CD4-positive, alpha-beta T cell (primary cell): ENCODE measurements at regions of chr2 and their contacts with region 1.

Region 1: GRCh38 chr2:28346587-28346986 is 46.1 kb upstream of the FOSL2 start:
- DNase-seq: no peak
- ATAC-seq: no peak
- H3K4me3 ChIP-seq: no peak overlapping the region
- H3K4me3 Mint-ChIP-seq: no peak overlapping the region
- H3K27ac ChIP-seq: no peak overlapping the region
- H3K27ac Mint-ChIP-seq: no peak overlapping the region
- H3K4me1 ChIP-seq: peaks cover 35% of the 10 kb centered on the region
- H3K4me1 Mint-ChIP-seq: peaks cover 19% of the 10 kb centered on the region
- H3K27me3 ChIP-seq: no peaks in the 10 kb centered on the region
- H3K27me3 Mint-ChIP-seq: no peaks in the 10 kb centered on the region
- CTCF ChIP-seq: no peak

Region 2: DNA sequence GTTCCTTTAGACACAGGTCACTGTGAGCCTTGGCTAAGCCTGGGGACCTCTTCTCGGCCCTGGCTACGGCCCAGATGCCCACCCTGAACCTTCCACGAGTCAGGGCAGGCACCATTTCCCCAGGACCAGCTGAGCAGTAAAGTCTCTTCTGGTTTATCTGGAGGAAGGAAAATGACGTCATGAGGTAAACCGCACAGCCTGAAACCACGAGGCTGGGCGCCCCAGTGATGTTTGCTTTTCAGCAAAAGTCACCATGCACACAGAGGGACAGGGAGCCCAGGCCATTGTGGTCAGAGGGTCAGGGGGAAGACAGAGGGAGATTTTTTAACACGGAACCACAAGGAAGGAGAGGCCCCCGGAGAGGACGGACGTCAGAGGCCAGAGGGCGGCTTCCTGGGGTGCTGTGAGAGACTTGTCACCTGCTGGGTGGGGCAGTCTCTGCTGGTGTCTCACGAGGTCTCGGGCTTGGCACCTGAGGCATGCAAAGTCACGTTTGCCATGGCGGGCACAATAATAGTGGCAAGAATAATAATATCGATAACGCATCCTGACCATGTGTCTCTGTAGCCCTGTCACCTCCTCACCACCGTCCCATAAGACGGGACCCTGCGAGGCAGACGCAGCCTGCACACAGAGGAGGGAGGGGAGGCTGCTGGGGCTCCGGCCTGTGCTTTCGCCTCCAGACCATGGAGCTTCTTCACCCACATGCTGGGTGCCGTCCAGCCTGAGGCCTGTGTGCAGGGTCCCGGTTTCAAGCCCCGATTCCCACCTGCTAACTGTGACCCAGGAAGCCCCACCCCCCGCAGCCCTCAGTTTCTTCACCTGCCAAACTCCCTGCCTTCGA is 12.9 kb after region 1 on chr2:
- CTCF ChIA-PET with region 1: no interaction called
- POLR2A ChIA-PET with region 1: no interaction called
- intact Hi-C with region 1: no loop called
- DNase-seq: peak; percentile 54 to 94 (median 72)
- ATAC-seq: peak; percentile 84
- H3K4me3 ChIP-seq: peak overlapping the region; percentile 19
- H3K4me3 Mint-ChIP-seq: peak overlapping the region; percentile 91
- H3K27ac ChIP-seq: peak overlapping the region in 1 of 2 donors; percentile 44
- H3K27ac Mint-ChIP-seq: peak overlapping the region; percentile 89
- H3K4me1 ChIP-seq: peaks cover 84% of the 10 kb centered on the region
- H3K4me1 Mint-ChIP-seq: peaks cover 53% of the 10 kb centered on the region
- H3K27me3 ChIP-seq: no peaks in the 10 kb centered on the region
- H3K27me3 Mint-ChIP-seq: peaks cover 4% of the 10 kb centered on the region
- CTCF ChIP-seq: no peak

Region 3: GRCh38 chr2:28437151-28437811 is 90.7 kb after region 1 on chr2:
- CTCF ChIA-PET with region 1: no interaction called
- POLR2A ChIA-PET with region 1: no interaction called
- intact Hi-C with region 1: loop called in 1 of 2 experiments (anchors 5 kb)
- DNase-seq: peak in 1 of 14 experiments; percentile 34
- ATAC-seq: no peak
- H3K4me3 ChIP-seq: no peak overlapping the region
- H3K4me3 Mint-ChIP-seq: no peak overlapping the region
- H3K27ac ChIP-seq: no peak overlapping the region
- H3K27ac Mint-ChIP-seq: no peak overlapping the region
- H3K4me1 ChIP-seq: peaks cover 5% of the 10 kb centered on the region
- H3K4me1 Mint-ChIP-seq: no peaks in the 10 kb centered on the region
- H3K27me3 ChIP-seq: no peaks in the 10 kb centered on the region
- H3K27me3 Mint-ChIP-seq: no peaks in the 10 kb centered on the region
- CTCF ChIP-seq: no peak

Region 4: DNA sequence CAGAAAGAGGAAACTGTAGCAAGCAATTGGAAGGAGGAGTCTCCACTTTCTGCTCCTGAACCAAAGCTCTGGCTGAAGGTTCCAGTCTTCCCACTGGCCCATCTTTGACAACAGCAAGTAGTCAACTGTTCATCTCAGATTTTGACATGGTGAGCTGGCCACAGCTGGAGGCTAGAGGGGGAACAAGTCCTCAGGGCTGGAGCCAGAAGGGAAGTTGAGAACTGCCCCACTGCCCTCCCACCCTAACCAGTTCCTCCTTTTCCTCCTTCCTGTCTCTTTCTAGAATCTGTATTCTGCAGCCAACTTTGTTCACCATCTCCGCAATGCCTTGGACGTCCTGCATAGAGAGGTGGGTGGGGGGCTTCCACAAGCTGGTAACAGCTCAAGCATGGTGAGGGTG is 255.0 kb after region 1 on chr2:
- CTCF ChIA-PET with region 1: no interaction called
- POLR2A ChIA-PET with region 1: no interaction called
- intact Hi-C with region 1: no loop called
- DNase-seq: no peak
- ATAC-seq: no peak
- H3K4me3 ChIP-seq: no peak overlapping the region
- H3K4me3 Mint-ChIP-seq: no peak overlapping the region
- H3K27ac ChIP-seq: no peak overlapping the region
- H3K27ac Mint-ChIP-seq: no peak overlapping the region
- H3K4me1 ChIP-seq: peaks cover 20% of the 10 kb centered on the region
- H3K4me1 Mint-ChIP-seq: peaks cover 11% of the 10 kb centered on the region
- H3K27me3 ChIP-seq: no peaks in the 10 kb centered on the region
- H3K27me3 Mint-ChIP-seq: no peaks in the 10 kb centered on the region
- CTCF ChIP-seq: no peak